CD8-positive, alpha-beta T cell (primary cell): ENCODE measurements at regions of chr13 and their contacts with region 1.

Region 1: DNA sequence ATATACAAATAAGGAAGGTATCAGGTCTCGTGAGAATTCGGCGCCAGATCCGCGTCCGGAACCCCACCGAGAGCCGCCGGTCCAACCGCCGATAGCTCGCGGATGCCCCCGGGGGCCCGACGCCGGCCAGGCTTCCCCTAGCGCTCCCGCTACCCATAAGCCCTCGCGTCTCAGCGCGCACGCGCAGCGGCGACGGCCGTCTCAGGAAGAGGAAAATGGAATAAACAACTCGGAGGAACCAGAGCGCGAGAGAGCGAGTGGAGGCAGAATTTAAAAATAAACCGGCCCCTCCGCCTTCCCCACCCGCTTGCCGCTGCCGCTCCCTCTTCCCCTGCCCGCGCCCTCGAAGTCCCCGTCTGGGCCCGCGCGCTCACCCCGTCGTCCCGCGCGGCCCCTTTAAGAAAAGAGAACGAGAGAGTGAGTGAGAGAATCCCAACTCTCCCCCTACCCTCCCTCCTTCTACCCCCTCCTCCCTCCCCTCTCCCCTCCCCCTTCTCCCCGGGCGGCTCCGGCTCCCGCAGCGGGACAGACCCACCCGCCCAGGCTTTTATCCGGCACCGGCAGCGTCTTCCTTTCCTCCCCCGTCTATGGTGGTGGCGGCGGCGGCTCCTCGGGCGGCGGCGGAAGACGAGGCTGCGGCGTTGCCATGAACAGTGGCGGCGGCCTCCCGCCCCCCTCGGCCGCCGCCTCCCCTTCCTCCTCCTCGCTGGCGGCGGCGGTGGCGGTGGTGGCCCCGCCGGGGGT is at the start of gene PAN3:
- DNase-seq: peak; percentile 83 to 96 (median 93)
- ATAC-seq: peak; percentile 54
- H3K4me3 ChIP-seq: peak within 1 kb of the TSS; percentile 67 to 80
- H3K4me3 Mint-ChIP-seq: peak within 1 kb of the TSS; percentile 97
- H3K27ac ChIP-seq: peak within 1 kb of the TSS; percentile 90 to 97
- H3K27ac Mint-ChIP-seq: peak within 1 kb of the TSS; percentile 98
- H3K4me1 ChIP-seq: peaks cover 35% of the 10 kb centered on the region
- H3K4me1 Mint-ChIP-seq: peaks cover 52% of the 10 kb centered on the region
- H3K27me3 ChIP-seq: no peaks in the 10 kb centered on the region
- H3K27me3 Mint-ChIP-seq: no peaks in the 10 kb centered on the region
- CTCF ChIP-seq: no peak
- total RNA-seq, gene PAN3: 55.8 to 55.9 TPM

Region 2: GRCh38 chr13:26221721-26222519 is 1916.3 kb before region 1 on chr13 and contains the start of gene RNF6:
- CTCF ChIA-PET with region 1: no interaction called
- POLR2A ChIA-PET with region 1: no interaction called
- intact Hi-C with region 1: loop called in 1 of 2 experiments (anchors 10 kb)
- DNase-seq: peak; percentile 73 to 97 (median 86)
- ATAC-seq: peak; percentile 92
- H3K4me3 ChIP-seq: peak within 1 kb of the TSS; percentile 97 to 99
- H3K4me3 Mint-ChIP-seq: peak within 1 kb of the TSS; percentile 99
- H3K27ac ChIP-seq: peak within 1 kb of the TSS; percentile 90 to 98
- H3K27ac Mint-ChIP-seq: peak within 1 kb of the TSS; percentile 100
- H3K4me1 ChIP-seq: peaks cover 26% of the 10 kb centered on the region
- H3K4me1 Mint-ChIP-seq: peaks cover 45% of the 10 kb centered on the region
- H3K27me3 ChIP-seq: no peaks in the 10 kb centered on the region
- H3K27me3 Mint-ChIP-seq: no peaks in the 10 kb centered on the region
- CTCF ChIP-seq: no peak
- total RNA-seq, gene RNF6: 50.3 to 55.0 TPM

Region 3: GRCh38 chr13:27449936-27450828 is 688.0 kb before region 1 on chr13 and contains the start of gene MTIF3:
- CTCF ChIA-PET with region 1: no interaction called
- POLR2A ChIA-PET with region 1: no interaction called
- intact Hi-C with region 1: loop called in 1 of 2 experiments (anchors 2 kb)
- DNase-seq: peak; percentile 94 to 99 (median 98)
- ATAC-seq: peak; percentile 81
- H3K4me3 ChIP-seq: peak within 1 kb of the TSS; percentile 82 to 92
- H3K4me3 Mint-ChIP-seq: peak within 1 kb of the TSS; percentile 93
- H3K27ac ChIP-seq: peak within 1 kb of the TSS; percentile 90 to 97
- H3K27ac Mint-ChIP-seq: peak within 1 kb of the TSS; percentile 99
- H3K4me1 ChIP-seq: peaks cover 54% of the 10 kb centered on the region
- H3K4me1 Mint-ChIP-seq: peaks cover 57% of the 10 kb centered on the region
- H3K27me3 ChIP-seq: no peaks in the 10 kb centered on the region
- H3K27me3 Mint-ChIP-seq: no peaks in the 10 kb centered on the region
- CTCF ChIP-seq: no peak
- total RNA-seq, gene MTIF3: 12.7 to 13.0 TPM

Region 4: DNA sequence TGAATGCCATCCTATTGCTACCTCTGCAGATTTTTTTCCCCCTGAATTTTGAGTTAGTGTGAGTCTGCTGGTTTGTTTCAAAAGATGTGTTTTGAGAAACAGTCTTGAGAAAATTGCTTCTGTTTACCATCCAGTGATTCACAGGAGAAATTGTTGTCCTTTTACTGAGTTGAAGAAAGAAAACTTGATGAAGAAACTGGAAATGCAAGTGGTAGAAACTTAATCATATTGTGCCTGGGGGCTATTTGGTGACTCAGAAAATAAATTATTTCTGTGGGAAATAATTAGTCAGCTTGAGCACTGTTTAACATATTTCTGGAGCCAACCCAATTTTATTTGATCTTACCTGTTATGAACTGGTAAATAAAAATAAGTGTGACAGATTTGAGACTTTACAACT is 35.6 kb after region 1 on chr13:
- CTCF ChIA-PET with region 1: no interaction called
- POLR2A ChIA-PET with region 1: no interaction called
- intact Hi-C with region 1: loop called in 1 of 2 experiments (anchors 5 kb)
- DNase-seq: no peak
- ATAC-seq: no peak
- H3K4me3 ChIP-seq: no peak overlapping the region
- H3K4me3 Mint-ChIP-seq: no peak overlapping the region
- H3K27ac ChIP-seq: no peak overlapping the region
- H3K27ac Mint-ChIP-seq: peak overlapping the region; percentile 29
- H3K4me1 ChIP-seq: peaks cover 5% of the 10 kb centered on the region
- H3K4me1 Mint-ChIP-seq: peaks cover 45% of the 10 kb centered on the region
- H3K27me3 ChIP-seq: no peaks in the 10 kb centered on the region
- H3K27me3 Mint-ChIP-seq: no peaks in the 10 kb centered on the region
- CTCF ChIP-seq: no peak

Region 5: GRCh38 chr13:28204690-28205443 is 66.7 kb after region 1 on chr13:
- CTCF ChIA-PET with region 1: no interaction called
- POLR2A ChIA-PET with region 1: no interaction called
- intact Hi-C with region 1: loop called in 1 of 2 experiments (anchors 1 kb)
- DNase-seq: no peak
- ATAC-seq: no peak
- H3K4me3 ChIP-seq: no peak overlapping the region
- H3K4me3 Mint-ChIP-seq: no peak overlapping the region
- H3K27ac ChIP-seq: no peak overlapping the region
- H3K27ac Mint-ChIP-seq: no peak overlapping the region
- H3K4me1 ChIP-seq: peaks cover 17% of the 10 kb centered on the region
- H3K4me1 Mint-ChIP-seq: peaks cover 39% of the 10 kb centered on the region
- H3K27me3 ChIP-seq: no peaks in the 10 kb centered on the region
- H3K27me3 Mint-ChIP-seq: no peaks in the 10 kb centered on the region
- CTCF ChIP-seq: no peak

Region 6: GRCh38 chr13:28658796-28659620 is 520.8 kb after region 1 on chr13 and contains the start of gene POMP:
- CTCF ChIA-PET with region 1: no interaction called
- POLR2A ChIA-PET with region 1: interaction called, 4 read pairs
- intact Hi-C with region 1: loop called (anchors 1 to 2 kb)
- DNase-seq: peak; percentile 79 to 95 (median 93)
- ATAC-seq: peak; percentile 77
- H3K4me3 ChIP-seq: peak within 1 kb of the TSS; percentile 72 to 73
- H3K4me3 Mint-ChIP-seq: peak within 1 kb of the TSS; percentile 98
- H3K27ac ChIP-seq: peak within 1 kb of the TSS; percentile 85 to 97
- H3K27ac Mint-ChIP-seq: peak within 1 kb of the TSS; percentile 99
- H3K4me1 ChIP-seq: peaks cover 33% of the 10 kb centered on the region
- H3K4me1 Mint-ChIP-seq: peaks cover 62% of the 10 kb centered on the region
- H3K27me3 ChIP-seq: no peaks in the 10 kb centered on the region
- H3K27me3 Mint-ChIP-seq: no peaks in the 10 kb centered on the region
- CTCF ChIP-seq: no peak
- total RNA-seq, gene POMP: 34.7 to 38.0 TPM